ENCODE measurements at regions of chr5 and their contacts with region 1.

Region 1: GRCh38 chr5:173745123-173745522 is 128.7 kb upstream of the BOD1 start:
- DNase-seq: peak; percentile 99
- H3K4me3 ChIP-seq: peak overlapping the region; percentile 62
- H3K27ac ChIP-seq: peak overlapping the region; percentile 99
- H3K4me1 ChIP-seq: peaks cover 79% of the 10 kb centered on the region
- CTCF ChIP-seq: no peak

Region 2: DNA sequence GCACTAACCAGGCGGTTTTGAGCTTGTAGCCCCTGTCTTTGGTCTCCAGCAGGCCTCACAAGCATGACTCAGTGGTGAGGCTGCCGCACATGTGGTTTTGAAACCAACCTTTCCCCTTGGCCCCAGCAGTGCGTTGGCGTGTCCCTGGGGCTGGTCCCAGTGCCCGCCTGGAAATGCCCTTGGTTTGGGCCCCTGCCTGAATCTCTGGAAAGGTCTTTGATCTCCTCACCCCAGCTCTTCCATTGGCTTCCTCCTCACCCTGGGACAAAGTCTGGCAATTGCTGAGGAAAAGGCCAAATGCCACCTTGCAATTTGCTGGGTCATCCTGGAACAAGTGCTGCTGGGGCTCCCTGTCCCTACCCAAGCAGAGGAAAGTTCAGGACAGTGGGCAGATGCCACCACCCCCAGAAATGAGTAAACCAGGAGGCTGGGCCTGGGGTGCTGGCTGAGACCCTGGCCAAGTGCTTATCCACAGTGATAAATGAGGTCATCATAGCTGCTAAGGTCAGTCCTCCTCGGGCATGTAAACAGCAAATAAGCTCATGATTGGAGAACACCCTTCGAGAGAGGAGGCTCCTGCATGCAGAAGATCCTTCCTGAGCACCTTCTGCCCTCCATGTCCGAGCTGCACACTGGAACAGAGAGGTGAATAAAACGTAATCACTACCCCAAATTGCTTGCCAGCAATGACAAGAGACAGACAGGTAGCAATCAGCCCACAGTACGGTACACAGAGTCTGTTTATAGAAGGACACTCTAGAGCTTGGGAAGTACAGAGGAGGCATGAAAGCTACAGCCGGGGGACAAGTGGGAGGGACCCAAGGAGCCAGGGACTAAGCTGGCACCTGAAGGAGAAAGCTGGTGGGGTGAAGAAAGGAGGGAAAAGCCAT is 44.2 kb after region 1 on chr5:
- CTCF ChIA-PET with region 1: interaction called, 3 read pairs
- POLR2A ChIA-PET with region 1: interaction called, 11 read pairs
- intact Hi-C with region 1: loop called (anchors 1 kb)
- DNase-seq: peak; percentile 31
- H3K4me3 ChIP-seq: no peak overlapping the region
- H3K27ac ChIP-seq: no peak overlapping the region
- H3K4me1 ChIP-seq: peaks cover 63% of the 10 kb centered on the region
- CTCF ChIP-seq: no peak

Region 3: GRCh38 chr5:173887610-173888472 is 142.7 kb after region 1 on chr5 and contains the start of gene CPEB4:
- CTCF ChIA-PET with region 1: interaction called, 3 read pairs
- POLR2A ChIA-PET with region 1: interaction called, 7 read pairs
- intact Hi-C with region 1: loop called (anchors 1 kb)
- DNase-seq: peak; percentile 100
- H3K4me3 ChIP-seq: peak within 1 kb of the TSS; percentile 88
- H3K27ac ChIP-seq: peak within 1 kb of the TSS; percentile 48
- H3K4me1 ChIP-seq: peaks cover 59% of the 10 kb centered on the region
- CTCF ChIP-seq: no peak
- total RNA-seq, gene CPEB4: 11.8 and 12.6 TPM in 2 replicates

Region 4: GRCh38 chr5:173907686-173908371 is 162.7 kb after region 1 on chr5:
- CTCF ChIA-PET with region 1: interaction called, 8 read pairs
- POLR2A ChIA-PET with region 1: interaction called, 12 read pairs
- intact Hi-C with region 1: no loop called
- DNase-seq: no peak
- H3K4me3 ChIP-seq: peak overlapping the region; percentile 50
- H3K27ac ChIP-seq: peak overlapping the region; percentile 75
- H3K4me1 ChIP-seq: peaks cover 86% of the 10 kb centered on the region
- CTCF ChIP-seq: no peak

Region 5: GRCh38 chr5:173972925-173973615 is 227.9 kb after region 1 on chr5:
- CTCF ChIA-PET with region 1: interaction called, 4 read pairs
- POLR2A ChIA-PET with region 1: no interaction called
- intact Hi-C with region 1: loop called (anchors 2 kb)
- DNase-seq: peak; percentile 85
- H3K4me3 ChIP-seq: peak overlapping the region; percentile 51
- H3K27ac ChIP-seq: no peak overlapping the region
- H3K4me1 ChIP-seq: peaks cover 29% of the 10 kb centered on the region
- CTCF ChIP-seq: peak; percentile 95